HCT116 (cell line): ENCODE measurements at regions of chr5 and their contacts with region 1.

Region 1: DNA sequence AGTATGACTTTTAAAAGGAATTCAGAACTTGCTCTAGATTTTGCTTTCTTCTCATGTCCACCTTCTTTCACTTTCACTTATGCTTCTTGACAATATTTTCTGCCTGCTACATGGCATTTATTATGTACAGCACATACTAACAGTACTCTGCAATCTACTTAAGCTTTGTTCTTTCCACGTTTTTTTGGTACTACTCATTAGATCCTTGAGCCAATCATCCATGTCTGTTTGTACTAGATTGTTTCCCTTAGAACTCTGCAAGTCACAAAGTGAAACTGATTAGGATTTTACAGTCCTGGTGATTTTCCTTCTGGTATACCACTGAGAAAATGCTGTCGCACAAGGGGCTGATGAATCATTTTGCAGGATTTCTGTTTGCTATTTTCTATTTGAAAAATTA is 78.3 kb downstream of the PARP8 start:
- DNase-seq: no peak
- ATAC-seq: no peak
- H3K4me3 ChIP-seq: no peak overlapping the region
- H3K27ac ChIP-seq: no peak overlapping the region
- H3K4me1 ChIP-seq: no peaks in the 10 kb centered on the region
- H3K27me3 ChIP-seq: no peaks in the 10 kb centered on the region
- CTCF ChIP-seq: no peak
- POLR2A ChIP-seq: no peak
- RAD21 ChIP-seq: no peak

Region 2: GRCh38 chr5:50794812-50795211 is 50.0 kb after region 1 on chr5:
- CTCF ChIA-PET with region 1: no interaction called
- POLR2A ChIA-PET with region 1: no interaction called
- RAD21 ChIA-PET with region 1: no interaction called
- intact Hi-C with region 1: loop called (anchors 5 kb)
- DNase-seq: no peak
- ATAC-seq: no peak
- H3K4me3 ChIP-seq: no peak overlapping the region
- H3K27ac ChIP-seq: no peak overlapping the region
- H3K4me1 ChIP-seq: no peaks in the 10 kb centered on the region
- H3K27me3 ChIP-seq: no peaks in the 10 kb centered on the region
- CTCF ChIP-seq: no peak
- POLR2A ChIP-seq: no peak
- RAD21 ChIP-seq: no peak